Esophagus muscularis mucosa (tissue), 4 donors: ENCODE measurements at regions of chr15 and their contacts with region 1.

Region 1: DNA sequence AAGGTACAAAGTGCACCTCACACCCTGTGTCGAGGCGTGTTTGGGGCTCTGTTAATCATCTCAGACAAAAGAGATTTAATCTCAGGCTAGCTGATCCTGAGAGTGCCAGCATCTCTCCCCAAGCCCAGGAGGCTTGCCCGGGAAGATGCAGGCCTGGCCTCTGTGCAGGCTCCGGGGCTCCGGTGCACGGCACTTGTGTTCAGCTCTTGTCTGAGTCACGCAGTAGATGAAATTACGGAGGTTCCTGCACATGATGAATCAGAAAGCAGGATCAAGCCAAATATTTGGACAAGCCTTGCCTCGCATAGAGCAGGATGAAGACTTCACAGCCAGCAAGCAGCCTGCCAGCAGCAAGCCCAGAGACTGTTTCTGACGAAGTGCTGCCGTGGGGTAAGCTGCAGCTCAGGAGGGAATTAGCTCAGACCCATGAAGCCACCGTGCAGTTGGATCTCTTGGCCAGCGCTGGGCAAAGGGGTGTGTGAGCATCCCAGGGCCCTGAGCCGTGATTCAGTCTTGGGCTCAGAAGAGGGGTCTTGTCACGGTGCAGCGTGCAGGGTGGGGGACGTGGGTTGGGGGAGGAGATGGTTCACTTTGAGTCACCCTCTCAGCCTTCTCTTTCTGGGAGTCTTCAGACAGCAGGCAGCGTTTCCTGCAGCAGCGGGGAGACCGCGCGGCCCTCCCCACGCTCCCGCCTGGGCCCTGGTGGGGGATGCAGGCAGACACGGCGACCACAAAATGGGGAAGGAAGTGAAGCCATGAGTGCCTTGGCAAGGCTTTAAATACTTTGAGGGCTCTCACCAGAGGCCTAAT is 89.2 kb upstream of the MEF2A start:
- DNase-seq: peak; percentile 95
- H3K4me3 ChIP-seq: peak overlapping the region in 2 of 4 donors; percentile 19 to 21
- H3K27ac ChIP-seq: peak overlapping the region; percentile 76 to 88 (median 84)
- H3K4me1 ChIP-seq: peaks cover 43 to 58% (median 45%) of the 10 kb centered on the region in 4 donors
- H3K27me3 ChIP-seq: no peaks in the 10 kb centered on the region
- CTCF ChIP-seq: no peak
- EP300 ChIP-seq: peak; percentile 38
- POLR2A ChIP-seq: no peak

Region 2: DNA sequence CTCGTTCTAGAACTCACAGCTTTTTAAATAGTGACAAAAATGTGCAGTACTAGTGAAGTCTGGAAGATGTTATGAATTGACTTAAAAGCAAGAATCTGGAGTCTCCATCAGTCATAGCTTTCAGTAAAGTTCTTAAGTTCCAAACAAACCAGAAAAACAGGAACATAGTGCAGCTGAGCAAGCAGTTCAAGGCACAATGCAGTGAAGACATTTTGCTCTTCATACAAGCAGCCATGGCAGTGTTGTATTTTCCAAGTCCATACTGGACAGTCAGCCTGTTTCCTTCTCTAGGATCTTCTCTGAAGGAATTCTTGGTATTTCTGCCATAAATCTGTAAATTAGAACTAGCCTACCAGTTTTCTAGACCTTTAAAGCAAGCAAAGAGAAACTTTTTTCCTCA is 134.8 kb before region 1 on chr15:
- intact Hi-C with region 1: no loop called
- DNase-seq: no peak
- H3K4me3 ChIP-seq: no peak overlapping the region
- H3K27ac ChIP-seq: no peak overlapping the region
- H3K4me1 ChIP-seq: peaks cover 0 to 18% (median 0%) of the 10 kb centered on the region in 4 donors
- H3K27me3 ChIP-seq: no peaks in the 10 kb centered on the region
- CTCF ChIP-seq: no peak
- EP300 ChIP-seq: no peak
- POLR2A ChIP-seq: no peak

Region 3: DNA sequence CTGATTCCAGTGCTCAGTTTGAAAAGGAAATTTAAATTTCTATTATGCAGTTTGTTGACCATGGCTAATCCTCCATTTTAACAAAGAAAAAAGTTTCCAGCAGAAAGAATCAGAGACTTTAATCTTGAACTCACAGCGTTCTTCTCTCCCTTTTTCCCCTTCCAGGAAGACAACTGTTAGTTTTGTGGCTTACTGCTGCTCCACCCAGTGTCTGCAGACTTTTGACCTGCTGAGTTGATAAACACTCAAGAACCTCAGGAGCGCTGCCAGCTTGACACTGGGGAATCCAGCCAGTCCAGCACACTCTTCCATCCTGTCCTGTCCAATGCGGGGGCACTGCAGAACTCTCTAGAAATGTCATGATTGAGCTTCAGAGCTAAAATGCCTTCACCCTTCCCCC is 90.8 kb before region 1 on chr15:
- intact Hi-C with region 1: no loop called
- DNase-seq: no peak
- H3K4me3 ChIP-seq: no peak overlapping the region
- H3K27ac ChIP-seq: peak overlapping the region; percentile 40 to 65 (median 52)
- H3K4me1 ChIP-seq: peaks cover 16 to 21% (median 19%) of the 10 kb centered on the region in 4 donors
- H3K27me3 ChIP-seq: no peaks in the 10 kb centered on the region
- CTCF ChIP-seq: no peak
- EP300 ChIP-seq: no peak
- POLR2A ChIP-seq: no peak

Region 4: GRCh38 chr15:99507504-99508310 is 31.1 kb after region 1 on chr15:
- intact Hi-C with region 1: loop called (anchors 1 kb)
- DNase-seq: no peak
- H3K4me3 ChIP-seq: peak overlapping the region; percentile 6 to 33 (median 17)
- H3K27ac ChIP-seq: peak overlapping the region; percentile 76 to 87 (median 82)
- H3K4me1 ChIP-seq: peaks cover 50 to 81% (median 71%) of the 10 kb centered on the region in 4 donors
- H3K27me3 ChIP-seq: no peaks in the 10 kb centered on the region
- CTCF ChIP-seq: no peak
- EP300 ChIP-seq: peak; percentile 48
- POLR2A ChIP-seq: no peak

Region 5: GRCh38 chr15:99619712-99620111 is 143.1 kb after region 1 on chr15:
- intact Hi-C with region 1: no loop called
- DNase-seq: no peak
- H3K4me3 ChIP-seq: no peak overlapping the region
- H3K27ac ChIP-seq: peak overlapping the region in 2 of 4 donors; percentile 41 to 54
- H3K4me1 ChIP-seq: peaks cover 40 to 51% (median 48%) of the 10 kb centered on the region in 4 donors
- H3K27me3 ChIP-seq: no peaks in the 10 kb centered on the region
- CTCF ChIP-seq: no peak
- EP300 ChIP-seq: no peak
- POLR2A ChIP-seq: no peak